ENCODE measurements at regions of chr9 and their contacts with region 1.

Region 1: DNA sequence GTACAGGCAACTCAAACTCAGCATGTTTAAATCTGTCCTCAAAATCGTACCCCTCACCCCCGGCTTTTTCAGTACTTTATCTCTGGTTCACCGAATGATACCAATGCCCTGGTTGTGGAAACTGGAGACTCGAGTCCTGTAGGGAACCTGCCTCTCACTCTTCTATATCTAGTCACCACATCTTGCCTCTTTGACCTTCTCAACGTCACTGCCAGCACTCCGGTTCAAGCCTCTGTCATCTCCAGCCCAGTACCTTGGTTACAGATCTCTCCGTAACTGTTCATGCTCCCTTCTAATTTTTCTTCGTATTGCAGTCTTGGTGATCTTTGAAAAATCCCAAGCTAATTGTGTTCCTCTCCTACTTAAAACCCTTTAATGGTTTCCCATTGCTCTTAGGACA is 6.7 kb downstream of the SLC44A1 start:
- DNase-seq: no peak
- H3K4me3 ChIP-seq: no peak overlapping the region
- H3K27ac ChIP-seq: no peak overlapping the region
- H3K4me1 ChIP-seq: peaks cover 19% of the 10 kb centered on the region
- H3K27me3 ChIP-seq: no peaks in the 10 kb centered on the region
- CTCF ChIP-seq: no peak

Region 2: GRCh38 chr9:104279535-104280190 is 971.5 kb before region 1 on chr9:
- CTCF ChIA-PET with region 1: no interaction called
- POLR2A ChIA-PET with region 1: no interaction called
- intact Hi-C with region 1: no loop called
- DNase-seq: no peak
- H3K4me3 ChIP-seq: no peak overlapping the region
- H3K27ac ChIP-seq: no peak overlapping the region
- H3K4me1 ChIP-seq: no peaks in the 10 kb centered on the region
- H3K27me3 ChIP-seq: no peaks in the 10 kb centered on the region
- CTCF ChIP-seq: no peak

Region 3: GRCh38 chr9:105264380-105264779 is 13.2 kb after region 1 on chr9:
- CTCF ChIA-PET with region 1: no interaction called
- POLR2A ChIA-PET with region 1: interaction called, 16 read pairs
- intact Hi-C with region 1: no loop called
- DNase-seq: peak in 1 of 2 experiments; percentile 71
- H3K4me3 ChIP-seq: no peak overlapping the region
- H3K27ac ChIP-seq: peak overlapping the region; percentile 69
- H3K4me1 ChIP-seq: peaks cover 12% of the 10 kb centered on the region
- H3K27me3 ChIP-seq: no peaks in the 10 kb centered on the region
- CTCF ChIP-seq: no peak

Region 4: GRCh38 chr9:106066940-106067524 is 815.9 kb after region 1 on chr9:
- CTCF ChIA-PET with region 1: no interaction called
- POLR2A ChIA-PET with region 1: no interaction called
- intact Hi-C with region 1: no loop called
- DNase-seq: no peak
- H3K4me3 ChIP-seq: no peak overlapping the region
- H3K27ac ChIP-seq: no peak overlapping the region
- H3K4me1 ChIP-seq: 0 out of 2 replicates have a peak, but pooled peaks cover 4% of the 10 kb centered on the region
- H3K27me3 ChIP-seq: no peaks in the 10 kb centered on the region
- CTCF ChIP-seq: no peak